ENCODE measurements at regions of chr2 and their contacts with region 1.

Region 1: DNA sequence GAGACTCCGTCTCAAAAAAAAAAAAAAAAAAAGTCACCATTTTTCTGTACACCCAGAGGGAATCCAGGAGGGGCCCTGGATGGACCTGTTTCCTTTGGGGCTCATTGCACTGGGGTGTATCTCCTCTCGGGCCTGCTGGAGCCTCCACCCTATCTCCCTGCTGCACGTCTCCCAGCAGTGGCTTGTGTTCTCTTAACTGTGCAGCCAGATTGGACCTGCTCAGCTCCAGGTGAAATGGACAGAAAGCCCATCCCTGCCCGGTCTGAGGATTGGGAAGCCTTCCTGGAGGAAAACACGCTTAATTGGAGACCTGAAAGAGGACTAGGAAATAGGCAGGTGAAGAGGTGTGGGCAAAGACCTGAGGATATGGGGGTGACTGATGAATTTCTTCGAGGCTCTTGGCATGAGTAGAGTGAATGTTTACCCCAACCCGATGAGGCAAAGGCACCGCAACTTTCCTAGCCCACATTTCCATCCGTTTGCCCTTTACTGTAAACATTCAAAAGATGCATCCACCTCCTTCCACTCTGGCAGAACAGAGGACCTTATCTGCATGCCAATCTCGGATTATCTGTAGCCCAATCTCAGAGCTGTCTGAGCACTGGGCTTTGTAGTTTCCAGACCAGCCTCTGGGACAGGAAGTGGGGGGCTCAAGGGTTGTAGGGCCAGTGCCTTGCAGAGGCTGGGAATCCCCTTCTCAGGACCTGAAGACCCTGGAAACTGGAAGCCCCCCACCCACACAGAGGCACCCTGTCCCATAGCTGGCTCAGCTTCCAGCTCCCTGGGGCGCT is 2.6 kb upstream of the ZAP70 start:
- DNase-seq: no peak
- H3K4me3 Mint-ChIP-seq: no peak overlapping the region
- H3K27ac Mint-ChIP-seq: no peak overlapping the region
- H3K4me1 Mint-ChIP-seq: peaks cover 49% of the 10 kb centered on the region
- H3K27me3 Mint-ChIP-seq: no peaks in the 10 kb centered on the region

Region 2: DNA sequence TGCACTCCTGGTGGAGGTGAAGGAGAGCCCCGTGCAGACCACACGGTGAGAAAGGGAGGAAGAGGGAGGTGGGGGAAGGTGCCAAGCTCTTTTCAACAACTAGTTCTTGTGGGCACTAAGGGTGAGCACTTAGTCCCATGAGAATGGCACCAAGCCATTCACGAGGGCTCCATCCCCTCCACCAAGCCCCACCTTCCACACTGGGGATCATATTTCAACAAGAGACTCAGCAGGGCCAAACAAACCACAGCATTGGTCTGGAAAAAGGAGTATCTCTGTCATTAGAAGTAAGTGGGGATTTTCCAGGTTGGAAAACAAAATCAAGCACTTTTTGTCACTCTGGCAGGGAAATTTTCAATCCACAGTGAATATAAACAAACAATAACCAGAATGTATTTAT is 41.0 kb after region 1 on chr2:
- CTCF ChIA-PET with region 1: interaction called, 96 read pairs
- POLR2A ChIA-PET with region 1: interaction called, 119 read pairs
- DNase-seq: no peak
- H3K4me3 Mint-ChIP-seq: no peak overlapping the region
- H3K27ac Mint-ChIP-seq: no peak overlapping the region
- H3K4me1 Mint-ChIP-seq: peaks cover 16% of the 10 kb centered on the region
- H3K27me3 Mint-ChIP-seq: no peaks in the 10 kb centered on the region

Region 3: GRCh38 chr2:97766567-97766966 is 55.8 kb after region 1 on chr2:
- CTCF ChIA-PET with region 1: interaction called, 11 read pairs
- POLR2A ChIA-PET with region 1: interaction called, 7 read pairs
- DNase-seq: no peak
- H3K4me3 Mint-ChIP-seq: no peak overlapping the region
- H3K27ac Mint-ChIP-seq: no peak overlapping the region
- H3K4me1 Mint-ChIP-seq: peaks cover 18% of the 10 kb centered on the region
- H3K27me3 Mint-ChIP-seq: no peaks in the 10 kb centered on the region

Region 4: DNA sequence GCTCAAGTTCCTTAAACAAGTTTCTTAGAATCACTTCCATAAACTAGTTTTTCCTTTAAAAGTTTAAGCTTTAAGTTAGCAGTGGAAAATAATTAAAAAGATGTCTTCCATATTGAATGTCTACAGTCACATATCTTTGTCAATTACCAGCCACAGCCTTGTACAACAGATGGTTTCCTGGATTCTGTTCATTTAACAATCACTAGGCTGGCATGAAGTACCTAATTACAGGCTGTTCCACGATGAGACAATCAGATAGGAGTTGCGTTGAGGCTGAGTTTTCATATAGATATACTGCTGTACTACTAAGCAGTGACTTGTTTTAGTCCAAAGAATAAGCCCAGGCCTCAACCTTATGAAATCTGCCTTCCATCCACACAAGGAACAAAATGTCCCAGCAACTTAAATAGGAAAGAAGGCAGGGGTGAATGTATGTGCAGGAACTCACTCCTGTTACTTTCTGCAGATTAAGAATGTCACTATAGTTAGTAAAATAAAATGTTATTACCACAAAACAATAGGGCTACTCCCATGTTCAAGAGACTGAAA is 133.6 kb after region 1 on chr2:
- CTCF ChIA-PET with region 1: no interaction called
- POLR2A ChIA-PET with region 1: no interaction called
- DNase-seq: no peak
- H3K4me3 Mint-ChIP-seq: no peak overlapping the region
- H3K27ac Mint-ChIP-seq: no peak overlapping the region
- H3K4me1 Mint-ChIP-seq: peaks cover 27% of the 10 kb centered on the region
- H3K27me3 Mint-ChIP-seq: no peaks in the 10 kb centered on the region

Measured in activated CD4-positive, alpha-beta memory T cell treated with anti-CD3 and anti-CD28 coated beads, Interleukin-2, amount 10 ng/mL, durations not matched to agents 7 days and 5 days (primary cell).